Heart right ventricle (tissue), 16 donors: ENCODE measurements at regions of chr3 and their contacts with region 1.

Region 1: DNA sequence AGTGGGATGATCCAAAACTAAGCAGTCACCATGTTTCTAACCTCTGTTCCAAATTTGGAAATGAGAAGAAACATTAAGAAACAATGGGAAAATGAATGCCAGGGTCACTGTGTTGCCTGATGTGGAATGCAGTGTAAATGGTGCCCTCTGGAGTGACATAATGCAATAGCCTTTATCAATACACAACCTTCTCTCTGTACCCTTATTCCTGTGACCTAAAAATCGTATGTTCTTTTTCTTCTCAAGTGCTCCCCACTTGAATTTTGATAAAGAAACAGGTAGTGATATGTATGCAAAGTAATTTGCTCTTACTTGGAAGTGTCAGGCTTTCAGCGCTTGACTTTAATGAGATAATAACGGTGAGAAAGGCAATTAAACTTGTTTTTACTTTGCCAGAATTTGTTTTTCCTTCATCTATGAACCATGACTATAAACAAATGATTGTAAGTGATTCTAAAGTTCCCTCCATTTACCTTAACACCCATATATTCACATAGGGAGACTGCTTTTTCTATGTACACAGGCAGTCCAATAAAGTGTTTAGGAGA is 145.8 kb upstream of the THRB start:
- DNase-seq: no peak
- ATAC-seq: peak in 3 of 8 donors; percentile 42 to 68 (median 49)
- H3K4me3 ChIP-seq: no peak overlapping the region
- H3K27ac ChIP-seq: no peak overlapping the region
- H3K4me1 ChIP-seq: peaks cover 0 to 13% (median 0%) of the 10 kb centered on the region in 9 donors
- H3K27me3 ChIP-seq: no peaks in the 10 kb centered on the region
- CTCF ChIP-seq: peak in 8 of 9 donors; percentile 12 to 63 (median 52)

Region 2: DNA sequence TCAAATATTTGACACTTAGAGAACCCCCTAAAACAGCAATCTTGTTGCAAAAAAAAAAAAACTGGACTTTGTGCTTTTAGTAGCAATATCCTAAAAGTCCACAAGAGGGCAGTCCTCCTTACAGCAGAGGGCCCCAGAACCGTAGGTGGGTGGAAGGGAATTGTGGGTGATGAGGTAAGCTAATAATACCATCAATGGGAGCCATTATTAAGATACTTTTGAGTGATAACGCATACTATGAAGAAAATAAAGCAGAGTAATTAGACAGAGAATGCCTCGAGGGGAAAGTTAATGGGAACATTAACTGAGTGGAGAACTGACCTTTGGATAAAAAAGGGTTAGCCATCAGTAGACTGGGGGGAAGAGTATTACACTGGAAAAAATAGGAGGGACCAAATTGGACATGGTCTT is 375.7 kb before region 1 on chr3:
- intact Hi-C with region 1: loop called in 2 of 10 experiments (anchors 10 kb)
- DNase-seq: no peak
- ATAC-seq: peak in 4 of 8 donors; percentile 17 to 67 (median 48)
- H3K4me3 ChIP-seq: no peak overlapping the region
- H3K27ac ChIP-seq: no peak overlapping the region
- H3K4me1 ChIP-seq: peaks cover 0 to 16% (median 0%) of the 10 kb centered on the region in 9 donors
- H3K27me3 ChIP-seq: no peaks in the 10 kb centered on the region
- CTCF ChIP-seq: peak; percentile 48 to 80 (median 69)

Region 3: DNA sequence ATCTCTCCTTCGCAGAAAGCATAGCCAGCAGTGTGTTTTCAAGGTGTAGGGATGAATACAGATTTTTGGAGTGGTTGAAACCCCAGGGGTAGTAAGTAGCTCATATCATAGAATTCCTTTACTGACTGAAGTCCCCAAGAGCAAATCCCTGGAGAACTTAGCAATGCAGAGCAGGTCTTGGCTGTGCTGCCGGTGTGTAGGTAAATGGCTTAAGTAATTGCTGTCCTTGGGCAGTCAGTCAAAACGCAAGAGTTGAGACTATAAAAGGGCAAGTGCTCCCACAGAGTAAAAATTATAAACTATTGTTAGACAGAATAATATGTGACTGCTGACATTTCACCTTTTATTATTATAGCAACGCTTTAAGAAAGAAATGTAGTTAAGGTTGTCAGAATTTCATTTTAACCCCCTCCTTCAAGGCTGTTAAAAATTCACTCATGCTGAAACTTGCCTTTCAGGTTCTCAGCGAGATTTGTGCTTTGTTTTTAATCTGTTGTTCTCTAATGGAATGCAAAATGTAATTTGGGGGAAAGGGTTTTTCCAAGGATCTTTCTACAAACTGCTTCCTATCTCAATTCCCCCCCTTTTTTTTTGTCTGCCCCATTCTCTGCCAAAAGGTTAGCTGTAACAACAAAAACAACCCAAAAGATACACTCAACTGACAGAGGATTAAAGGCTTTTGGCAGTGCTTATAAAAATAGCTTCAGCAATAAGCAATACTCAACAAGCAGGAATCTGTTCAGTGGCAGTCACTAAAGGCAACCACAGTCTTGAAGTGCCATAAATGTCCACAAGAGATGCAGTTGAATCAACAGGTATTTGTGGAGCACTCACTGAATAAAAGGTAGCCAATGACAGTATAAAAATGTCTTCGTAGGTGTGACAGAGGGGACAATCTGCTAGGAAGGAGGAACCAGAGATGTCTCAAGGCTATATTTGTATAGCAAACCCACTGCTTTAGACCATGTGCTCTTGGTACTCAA is 251.0 kb before region 1 on chr3:
- intact Hi-C with region 1: loop called in 1 of 10 experiments (anchors 10 kb)
- DNase-seq: no peak
- ATAC-seq: no peak
- H3K4me3 ChIP-seq: no peak overlapping the region
- H3K27ac ChIP-seq: peak overlapping the region in 1 of 10 donors; percentile 1
- H3K4me1 ChIP-seq: peaks cover 0 to 34% (median 8%) of the 10 kb centered on the region in 9 donors
- H3K27me3 ChIP-seq: no peaks in the 10 kb centered on the region
- CTCF ChIP-seq: no peak

Region 4: DNA sequence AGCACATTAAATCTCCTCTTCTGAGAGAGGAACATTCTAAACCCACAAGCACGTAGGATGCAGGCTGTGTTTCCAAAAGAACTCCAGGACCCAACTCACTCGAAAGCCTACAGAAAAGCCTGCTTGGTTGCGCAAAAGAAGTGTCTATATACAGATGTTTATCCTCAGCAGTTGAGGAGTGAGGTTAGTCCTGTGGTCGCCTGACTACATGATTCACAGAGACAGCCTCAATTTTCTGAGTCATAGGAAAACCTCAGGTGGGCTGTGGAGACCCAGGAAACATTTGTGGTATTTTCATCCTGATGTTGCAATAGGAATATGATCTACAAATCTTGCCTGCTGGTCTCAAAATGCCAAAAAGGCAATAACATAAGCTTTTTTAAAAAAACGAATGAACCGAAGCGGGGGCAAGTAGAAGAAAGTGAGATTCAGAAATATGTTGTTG is 38.0 kb after region 1 on chr3:
- intact Hi-C with region 1: no loop called
- DNase-seq: no peak
- ATAC-seq: no peak
- H3K4me3 ChIP-seq: no peak overlapping the region
- H3K27ac ChIP-seq: peak overlapping the region in 1 of 10 donors; percentile 54
- H3K4me1 ChIP-seq: peaks cover 0 to 4% (median 0%) of the 10 kb centered on the region in 9 donors
- H3K27me3 ChIP-seq: peaks cover 0 to 4% (median 0%) of the 10 kb centered on the region in 7 donors
- CTCF ChIP-seq: no peak

Region 5: DNA sequence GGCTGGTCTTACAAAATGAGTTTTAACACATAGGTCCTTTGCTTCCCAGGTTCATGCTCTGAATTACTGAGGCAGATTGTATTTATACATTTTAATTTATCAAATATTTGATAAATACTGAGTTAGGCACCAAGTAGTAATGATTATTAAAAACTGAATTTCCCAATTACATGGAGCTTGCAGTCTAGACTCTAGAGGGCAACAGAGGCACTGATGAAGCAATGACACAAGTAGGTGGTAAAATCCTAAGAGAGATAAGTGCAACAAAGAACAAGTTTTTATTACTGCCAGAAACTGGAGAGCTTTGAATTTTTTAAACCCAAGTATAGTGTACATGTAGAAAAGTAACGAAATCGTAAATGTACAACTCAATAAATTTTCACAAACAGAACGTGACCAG is 381.4 kb after region 1 on chr3:
- intact Hi-C with region 1: no loop called
- DNase-seq: no peak
- ATAC-seq: peak in 4 of 8 donors; percentile 44 to 61 (median 59)
- H3K4me3 ChIP-seq: no peak overlapping the region
- H3K27ac ChIP-seq: no peak overlapping the region
- H3K4me1 ChIP-seq: no peaks in the 10 kb centered on the region
- H3K27me3 ChIP-seq: no peaks in the 10 kb centered on the region
- CTCF ChIP-seq: peak in 8 of 9 donors; percentile 30 to 74 (median 62)